ENCODE measurements at regions of chr1 and their contacts with region 1.

Region 1: DNA sequence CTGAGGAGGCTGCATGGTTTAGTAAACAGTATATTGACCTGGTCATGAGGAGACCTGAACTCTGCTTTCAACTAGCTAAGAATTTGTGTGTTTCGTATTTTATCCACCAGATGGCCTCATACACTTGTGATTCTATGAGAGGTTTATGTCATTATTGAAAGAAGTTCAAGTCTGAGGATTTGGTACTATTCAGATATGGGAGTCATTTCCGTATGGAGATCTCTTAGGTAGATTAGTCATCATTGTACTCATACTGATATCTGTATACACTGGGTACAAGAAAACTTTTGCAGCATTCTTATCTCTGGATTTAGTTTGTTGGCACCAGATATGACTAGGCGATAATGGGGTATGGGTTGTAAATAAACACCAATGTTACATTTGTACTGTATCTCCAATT is 26.6 kb downstream of the ATF6 start:
- DNase-seq: peak; percentile 85
- H3K4me3 ChIP-seq: no peak overlapping the region
- H3K27ac ChIP-seq: no peak overlapping the region
- H3K4me1 ChIP-seq: no peaks in the 10 kb centered on the region
- H3K27me3 ChIP-seq: no peaks in the 10 kb centered on the region
- CTCF ChIP-seq: peak; percentile 69

Region 2: DNA sequence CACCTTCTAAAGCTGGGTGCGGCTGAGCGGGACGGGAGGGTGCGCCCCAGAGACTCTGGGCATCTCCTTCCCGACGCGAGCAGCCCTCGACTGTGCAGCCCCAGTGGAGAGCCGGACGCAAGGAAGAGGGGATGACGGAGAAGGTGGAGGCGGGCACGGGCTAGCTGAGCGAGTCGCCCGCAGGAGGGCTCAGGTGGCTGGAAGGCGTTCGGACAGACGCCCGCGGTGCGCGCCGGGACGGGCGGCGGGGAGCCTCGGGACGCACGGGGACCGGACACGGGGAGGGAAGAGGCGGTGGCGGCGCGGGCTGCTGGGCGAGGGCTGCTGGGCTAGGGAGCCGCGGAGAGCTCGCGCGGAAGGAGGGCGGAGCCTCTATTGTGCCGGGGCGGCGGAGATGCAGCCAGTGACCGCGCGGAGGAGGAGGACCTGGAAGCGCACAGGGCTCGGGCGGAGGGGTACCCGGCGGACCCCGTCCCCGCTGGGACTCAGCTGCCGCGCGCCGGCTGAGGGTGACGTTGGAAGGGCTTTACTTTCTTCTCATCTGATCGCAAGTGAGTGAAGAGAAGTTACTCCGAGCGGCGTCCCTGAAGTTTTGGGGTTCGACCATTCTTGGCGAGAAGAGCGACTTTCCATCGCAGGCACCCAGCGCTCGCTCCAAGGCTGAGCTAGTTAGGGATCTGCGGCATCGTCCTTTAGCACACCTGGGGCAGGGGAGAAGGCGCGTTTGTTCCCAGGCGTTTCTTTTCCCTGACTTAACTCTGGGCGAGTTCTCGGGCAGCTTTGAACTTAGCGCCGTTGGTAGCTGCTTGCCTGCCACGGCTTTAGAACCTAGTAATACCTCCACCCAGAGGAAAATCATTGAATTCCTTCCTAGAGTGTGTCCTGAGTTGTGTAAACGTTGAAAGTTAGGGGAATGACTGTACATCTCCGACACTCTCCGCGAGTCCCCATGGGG is 231.1 kb after region 1 on chr1 and contains the start of gene OLFML2B:
- CTCF ChIA-PET with region 1: interaction called, 13 read pairs
- POLR2A ChIA-PET with region 1: no interaction called
- intact Hi-C with region 1: loop called (anchors 5 kb)
- DNase-seq: peak; percentile 83
- H3K4me3 ChIP-seq: peak within 1 kb of the TSS; percentile 74
- H3K27ac ChIP-seq: no peak within 1 kb of the TSS
- H3K4me1 ChIP-seq: peaks cover 19% of the 10 kb centered on the region
- H3K27me3 ChIP-seq: peaks cover 5% of the 10 kb centered on the region
- CTCF ChIP-seq: peak; percentile 53
- total RNA-seq, gene OLFML2B: 3.4 and 3.7 TPM in 2 replicates

Region 3: GRCh38 chr1:162035241-162035640 is 242.5 kb after region 1 on chr1:
- CTCF ChIA-PET with region 1: interaction called, 114 read pairs
- POLR2A ChIA-PET with region 1: no interaction called
- intact Hi-C with region 1: loop called (anchors 1 kb)
- DNase-seq: no peak
- H3K4me3 ChIP-seq: no peak overlapping the region
- H3K27ac ChIP-seq: no peak overlapping the region
- H3K4me1 ChIP-seq: peaks cover 6% of the 10 kb centered on the region
- H3K27me3 ChIP-seq: no peaks in the 10 kb centered on the region
- CTCF ChIP-seq: no peak

Region 4: GRCh38 chr1:162040681-162041080 is 247.9 kb after region 1 on chr1:
- CTCF ChIA-PET with region 1: interaction called, 114 read pairs
- POLR2A ChIA-PET with region 1: no interaction called
- intact Hi-C with region 1: loop called (anchors 1 kb)
- DNase-seq: peak; percentile 67
- H3K4me3 ChIP-seq: no peak overlapping the region
- H3K27ac ChIP-seq: no peak overlapping the region
- H3K4me1 ChIP-seq: peaks cover 6% of the 10 kb centered on the region
- H3K27me3 ChIP-seq: no peaks in the 10 kb centered on the region
- CTCF ChIP-seq: peak; percentile 85